ENCODE measurements at regions of chr12 and their contacts with region 1.

Region 1: DNA sequence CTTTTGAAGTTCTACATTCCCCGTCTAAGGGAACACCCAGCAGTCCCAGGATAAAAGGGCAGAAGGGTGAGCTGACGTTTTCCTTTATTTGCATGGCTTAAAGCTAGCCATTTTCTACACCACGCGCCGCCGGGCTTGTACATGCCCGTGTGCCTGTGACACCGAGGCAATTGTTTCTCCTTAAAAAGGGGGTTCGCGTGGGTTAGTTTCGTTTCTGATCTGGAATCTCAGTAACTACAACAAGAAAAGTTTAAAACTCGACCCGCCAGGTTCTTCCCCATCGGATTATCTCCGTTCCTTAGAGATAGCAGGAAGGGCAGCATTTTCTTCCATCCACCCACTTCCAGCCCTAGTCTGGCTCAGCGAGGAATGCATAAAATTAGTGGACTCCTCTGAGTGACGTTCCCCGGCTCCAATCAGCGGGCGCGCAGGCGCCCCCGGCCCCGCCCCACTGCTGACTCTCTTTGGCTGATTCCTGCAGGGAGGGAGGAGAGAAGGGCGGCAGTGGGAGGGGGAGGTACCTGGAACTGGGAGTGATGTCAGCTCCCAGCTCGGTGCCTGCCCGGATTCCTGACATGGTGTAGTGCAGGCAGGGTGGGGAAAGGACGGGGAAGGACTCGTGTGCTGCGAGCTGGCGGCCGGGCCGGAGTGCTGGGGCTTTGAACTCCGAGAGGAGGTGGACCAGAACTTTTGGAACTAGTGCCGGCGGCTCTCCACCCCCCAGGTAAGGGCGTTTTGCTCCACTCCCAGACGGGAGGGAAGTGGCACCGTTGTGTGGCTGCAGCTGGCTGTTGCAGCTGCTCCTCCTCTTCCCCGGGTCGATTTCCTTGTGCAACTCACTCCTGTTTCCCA is at the start of gene PPFIBP1:
- DNase-seq: peak; percentile 99
- H3K4me3 ChIP-seq: peak within 1 kb of the TSS; percentile 47 to 73 (median 69)
- H3K27ac ChIP-seq: peak within 1 kb of the TSS; percentile 86 to 88 (median 87)
- H3K4me1 ChIP-seq: peaks cover 0 to 19% (median 7%) of the 10 kb centered on the region in 4 donors
- H3K27me3 ChIP-seq: no peaks in the 10 kb centered on the region
- CTCF ChIP-seq: peak in 1 of 4 experiments; percentile 24
- EP300 ChIP-seq: no peak
- POLR2A ChIP-seq: peak; percentile 70 to 74
- total RNA-seq, gene PPFIBP1: 65.3 to 101 (median 75.9) TPM

Region 2: GRCh38 chr12:27434673-27435565 is 88.9 kb before region 1 on chr12:
- intact Hi-C with region 1: loop called (anchors 5 kb)
- DNase-seq: no peak
- H3K4me3 ChIP-seq: no peak overlapping the region
- H3K27ac ChIP-seq: no peak overlapping the region
- H3K4me1 ChIP-seq: peaks cover 0 to 17% (median 14%) of the 10 kb centered on the region in 4 donors
- H3K27me3 ChIP-seq: no peaks in the 10 kb centered on the region
- CTCF ChIP-seq: peak in 2 of 4 experiments; percentile 12 to 69
- EP300 ChIP-seq: no peak
- POLR2A ChIP-seq: no peak

Region 3: GRCh38 chr12:27619308-27619707 is 95.4 kb after region 1 on chr12:
- intact Hi-C with region 1: loop called (anchors 10 kb)
- DNase-seq: no peak
- H3K4me3 ChIP-seq: no peak overlapping the region
- H3K27ac ChIP-seq: no peak overlapping the region
- H3K4me1 ChIP-seq: peaks cover 0 to 60% (median 38%) of the 10 kb centered on the region in 4 donors
- H3K27me3 ChIP-seq: no peaks in the 10 kb centered on the region
- CTCF ChIP-seq: no peak
- EP300 ChIP-seq: no peak
- POLR2A ChIP-seq: no peak

Region 4: GRCh38 chr12:27652174-27652763 is 128.4 kb after region 1 on chr12:
- intact Hi-C with region 1: loop called (anchors 2 kb)
- DNase-seq: no peak
- H3K4me3 ChIP-seq: no peak overlapping the region
- H3K27ac ChIP-seq: no peak overlapping the region
- H3K4me1 ChIP-seq: no peaks in the 10 kb centered on the region
- H3K27me3 ChIP-seq: no peaks in the 10 kb centered on the region
- CTCF ChIP-seq: peak; percentile 27 to 84 (median 81)
- EP300 ChIP-seq: no peak
- POLR2A ChIP-seq: no peak

Measured in sigmoid colon (tissue), 7 donors.